Ascending aorta (tissue), 2 donors: ENCODE measurements at regions of chr16 and their contacts with region 1.

Region 1: GRCh38 chr16:23739516-23739915 is 15.3 kb upstream of the CHP2 start:
- DNase-seq: no peak
- H3K4me3 ChIP-seq: no peak overlapping the region
- H3K27ac ChIP-seq: no peak overlapping the region
- H3K4me1 ChIP-seq: no peaks in the 10 kb centered on the region
- H3K27me3 ChIP-seq: no peaks in the 10 kb centered on the region
- CTCF ChIP-seq: no peak

Region 2: GRCh38 chr16:24010440-24011089 is 271.0 kb after region 1 on chr16:
- intact Hi-C with region 1: loop called (anchors 5 kb)
- DNase-seq: peak in 1 of 2 donors; percentile 83
- H3K4me3 ChIP-seq: no peak overlapping the region
- H3K27ac ChIP-seq: no peak overlapping the region
- H3K4me1 ChIP-seq: no peaks in the 10 kb centered on the region
- H3K27me3 ChIP-seq: no peaks in the 10 kb centered on the region
- CTCF ChIP-seq: peak; percentile 34 to 56 (median 45)